ENCODE measurements at regions of chr4 and their contacts with region 1.

Region 1: DNA sequence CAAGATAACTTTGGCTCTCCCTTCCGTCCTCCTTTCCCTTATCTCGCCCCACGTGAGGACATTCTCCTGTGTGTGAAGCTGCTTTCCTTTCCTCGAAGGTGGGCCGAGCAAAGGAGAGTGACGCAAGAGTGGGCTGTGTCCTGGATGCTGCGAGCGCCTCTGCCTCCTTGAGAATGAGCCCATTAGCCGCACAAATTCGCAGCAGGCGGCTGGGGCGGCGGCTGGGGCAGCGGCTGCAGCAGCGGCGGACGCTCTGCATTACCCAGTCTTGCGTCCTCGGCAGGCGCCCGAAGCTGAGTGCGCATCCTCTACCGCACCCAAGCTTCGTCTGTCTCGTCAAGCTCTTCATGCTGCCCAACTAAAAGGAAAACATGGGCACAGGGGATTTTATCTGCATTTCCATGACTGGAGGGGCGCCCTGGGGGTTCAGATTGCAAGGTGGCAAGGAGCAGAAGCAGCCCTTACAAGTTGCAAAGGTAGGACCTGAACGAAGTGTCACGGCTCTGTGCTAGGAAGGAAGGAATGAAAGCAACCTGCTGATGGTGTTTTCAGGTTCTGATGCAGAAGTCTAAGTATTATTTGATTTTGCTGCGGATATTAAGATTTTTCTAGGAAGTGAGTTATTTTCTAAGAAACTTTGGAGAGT is at the start of gene SYNPO2:
- DNase-seq: peak; percentile 81 to 83
- H3K4me3 ChIP-seq: peak within 1 kb of the TSS; percentile 25
- H3K4me1 ChIP-seq: peaks cover 17% of the 10 kb centered on the region
- H3K27me3 ChIP-seq: no peaks in the 10 kb centered on the region

Region 2: DNA sequence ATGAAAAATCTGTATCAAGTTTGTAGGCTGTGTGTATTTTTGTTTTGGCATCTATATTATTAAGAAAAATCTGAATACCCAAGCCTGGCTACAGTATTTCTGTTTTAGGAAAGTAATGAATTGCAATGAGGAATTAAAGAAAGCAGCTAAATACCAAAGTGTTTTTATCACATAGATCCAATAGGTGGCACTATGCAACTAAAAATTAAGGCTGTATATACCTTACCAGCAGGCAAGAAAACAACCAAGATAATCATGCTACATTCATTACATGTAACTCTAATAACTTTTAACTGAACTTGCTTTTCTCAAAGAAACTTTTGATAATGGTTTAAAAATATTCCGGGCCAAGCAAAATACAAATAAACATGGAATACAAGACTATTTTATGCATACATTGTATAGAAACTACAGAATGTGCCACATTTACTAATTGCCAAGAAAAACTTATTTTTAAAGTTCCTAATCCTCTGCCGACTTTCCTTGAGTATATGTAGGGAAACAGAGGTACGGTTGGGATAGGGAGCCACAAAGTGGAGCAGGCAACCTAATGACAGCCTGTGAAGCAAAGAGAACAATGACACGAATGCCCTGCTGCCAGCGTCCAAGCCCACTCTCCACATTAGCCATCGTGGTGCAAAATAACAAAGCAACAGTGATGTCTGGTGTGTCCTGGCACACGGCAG is 116.6 kb before region 1 on chr4:
- in situ Hi-C with region 1: loop called (anchors 25 kb)
- DNase-seq: peak in 1 of 2 experiments; percentile 71
- H3K4me3 ChIP-seq: no peak overlapping the region
- H3K4me1 ChIP-seq: peaks cover 7% of the 10 kb centered on the region
- H3K27me3 ChIP-seq: no peaks in the 10 kb centered on the region

Region 3: GRCh38 chr4:119212234-119212963 is 323.6 kb after region 1 on chr4 and contains the start of gene USP53:
- in situ Hi-C with region 1: no loop called
- DNase-seq: peak; percentile 94 to 99
- H3K4me3 ChIP-seq: peak within 1 kb of the TSS; percentile 87
- H3K4me1 ChIP-seq: peaks cover 4% of the 10 kb centered on the region
- H3K27me3 ChIP-seq: no peaks in the 10 kb centered on the region